AG04450 (cell line): ENCODE measurements at regions of chr17 and their contacts with region 1.

Region 1: DNA sequence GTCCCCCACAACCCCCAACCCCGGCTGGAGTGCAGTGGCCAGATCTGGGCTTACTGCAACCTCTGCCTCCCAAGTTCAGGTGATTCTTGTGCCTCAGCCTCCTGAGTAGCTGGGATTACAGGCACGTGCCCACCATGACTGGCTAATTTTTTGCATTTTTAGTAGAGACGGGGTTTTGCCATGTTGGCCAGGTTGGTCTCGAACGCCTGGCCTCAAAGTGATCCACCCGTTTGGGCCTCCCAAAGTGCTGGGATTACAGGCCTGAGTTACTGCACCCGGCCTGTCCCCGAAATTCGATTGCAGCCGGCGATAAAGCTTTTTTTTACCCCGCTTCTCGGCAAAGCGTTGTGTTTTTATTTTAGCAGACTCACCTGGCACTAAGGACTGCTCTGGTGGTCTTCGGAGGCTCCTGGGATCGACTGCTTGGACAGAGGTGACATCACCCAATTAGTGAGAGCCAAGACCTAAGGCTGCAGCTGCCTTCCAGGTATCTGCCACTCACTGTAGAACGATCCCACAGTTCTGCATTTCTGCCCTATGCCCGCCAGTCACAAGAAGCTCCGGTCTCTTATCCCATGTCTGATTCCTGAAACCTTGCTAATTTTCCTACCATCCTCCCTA is 82.2 kb upstream of the ARL4D start:
- DNase-seq: no peak
- H3K4me3 ChIP-seq: no peak overlapping the region
- H3K27ac ChIP-seq: no peak overlapping the region
- H3K27me3 ChIP-seq: no peaks in the 10 kb centered on the region
- CTCF ChIP-seq: no peak

Region 2: DNA sequence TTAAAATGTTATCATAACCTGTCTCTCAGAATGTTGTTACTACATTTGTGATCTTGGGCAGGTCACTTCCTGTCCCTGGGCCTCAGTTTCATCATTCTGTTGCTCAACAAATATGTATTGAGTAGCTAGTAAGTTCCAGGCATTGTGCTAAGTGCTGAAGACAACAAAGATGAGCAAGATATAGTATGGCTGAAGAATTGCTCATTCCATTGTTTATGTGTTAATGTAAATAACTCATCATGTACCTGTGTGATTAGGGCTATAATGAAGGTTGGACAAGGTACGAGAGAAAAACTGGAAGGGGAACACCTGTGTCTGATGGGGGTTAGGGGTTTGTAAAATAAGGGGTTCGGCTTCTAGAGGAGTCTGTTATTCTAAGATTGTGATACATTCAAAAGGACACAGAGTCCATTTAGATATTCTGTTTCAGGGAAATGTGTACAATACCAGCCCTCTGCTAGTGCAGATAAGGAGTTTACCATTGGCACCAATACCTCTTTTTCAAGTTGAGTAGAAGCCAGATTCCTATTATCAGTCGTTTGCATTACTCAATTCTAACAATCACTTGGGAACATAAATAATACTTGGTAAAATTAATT is 687.1 kb before region 1 on chr17:
- CTCF ChIA-PET with region 1: no interaction called
- POLR2A ChIA-PET with region 1: interaction called, 13 read pairs
- DNase-seq: no peak
- H3K4me3 ChIP-seq: no peak overlapping the region
- H3K27ac ChIP-seq: no peak overlapping the region
- H3K27me3 ChIP-seq: peaks cover 2% of the 10 kb centered on the region
- CTCF ChIP-seq: no peak

Region 3: DNA sequence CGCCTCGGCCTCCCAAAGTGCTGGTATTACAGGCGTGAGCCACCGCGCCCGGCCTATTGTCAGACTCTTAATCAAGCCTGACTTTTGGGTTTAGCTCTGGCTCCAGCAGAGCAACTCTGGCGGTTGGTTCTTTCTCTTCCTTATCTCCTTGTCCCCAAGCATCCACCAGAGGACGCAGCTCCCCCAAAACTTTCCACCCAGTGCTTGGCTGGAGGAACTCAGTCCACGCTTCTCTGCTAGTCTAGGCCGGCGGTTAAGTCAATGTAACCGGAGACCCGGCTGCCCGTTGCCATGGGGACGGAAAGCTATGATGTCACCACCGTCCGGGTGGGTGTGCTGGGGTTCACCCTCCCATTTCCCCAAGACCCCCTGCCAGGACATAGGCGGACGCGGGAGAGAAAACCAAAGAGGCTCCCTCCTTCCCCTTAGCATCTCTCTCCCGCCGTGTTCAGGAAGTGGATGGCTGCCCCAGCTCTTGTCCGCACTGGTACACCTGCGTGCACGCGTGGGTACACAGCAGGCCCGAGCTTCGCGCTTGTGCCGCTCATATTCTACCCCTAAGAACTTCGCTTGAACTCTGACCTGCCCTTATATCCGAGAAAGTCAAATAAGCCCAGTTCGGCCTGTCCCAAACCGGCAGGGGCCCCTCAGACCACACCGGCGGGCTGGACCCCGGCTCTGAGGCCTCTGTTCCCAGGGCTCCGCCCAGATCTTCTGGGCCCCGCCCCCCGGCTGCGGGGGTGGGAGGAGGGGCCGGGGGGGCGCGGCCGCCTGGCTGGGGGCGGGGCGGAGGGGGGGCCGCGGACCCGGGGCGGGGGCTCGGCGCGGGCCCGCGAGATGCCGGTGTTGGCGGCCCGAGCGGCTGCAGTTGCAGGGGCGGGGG is 292.0 kb before region 1 on chr17 and contains the start of gene RND2:
- CTCF ChIA-PET with region 1: no interaction called
- POLR2A ChIA-PET with region 1: interaction called, 22 read pairs
- DNase-seq: peak; percentile 84
- H3K4me3 ChIP-seq: peak within 1 kb of the TSS; percentile 72
- H3K27ac ChIP-seq: peak within 1 kb of the TSS; percentile 33
- H3K27me3 ChIP-seq: peaks cover 4% of the 10 kb centered on the region
- CTCF ChIP-seq: peak; percentile 87
- polyA plus RNA-seq, gene RND2: 1.7 and 2.1 TPM in 2 replicates

Region 4: GRCh38 chr17:43170766-43171585 is 145.7 kb before region 1 on chr17 and contains the start of gene NBR1:
- CTCF ChIA-PET with region 1: no interaction called
- POLR2A ChIA-PET with region 1: interaction called, 33 read pairs
- DNase-seq: peak; percentile 95
- H3K4me3 ChIP-seq: peak within 1 kb of the TSS; percentile 80
- H3K27ac ChIP-seq: peak within 1 kb of the TSS; percentile 91
- H3K27me3 ChIP-seq: no peaks in the 10 kb centered on the region
- CTCF ChIP-seq: peak; percentile 29; the same call in 1 of the 2 replicates
- polyA plus RNA-seq, gene NBR1: 103 and 107 TPM in 2 replicates

Region 5: GRCh38 chr17:43219746-43220380 is 96.8 kb before region 1 on chr17:
- CTCF ChIA-PET with region 1: no interaction called
- POLR2A ChIA-PET with region 1: interaction called, 10 read pairs
- DNase-seq: no peak
- H3K4me3 ChIP-seq: no peak overlapping the region
- H3K27ac ChIP-seq: no peak overlapping the region
- H3K27me3 ChIP-seq: no peaks in the 10 kb centered on the region
- CTCF ChIP-seq: no peak

Region 6: GRCh38 chr17:43388359-43389045 is 71.9 kb after region 1 on chr17:
- CTCF ChIA-PET with region 1: no interaction called
- POLR2A ChIA-PET with region 1: interaction called, 13 read pairs
- DNase-seq: peak; percentile 79
- H3K4me3 ChIP-seq: peak overlapping the region; percentile 69
- H3K27ac ChIP-seq: peak overlapping the region; percentile 96
- H3K27me3 ChIP-seq: no peaks in the 10 kb centered on the region
- CTCF ChIP-seq: no peak

Region 7: GRCh38 chr17:43431714-43432523 is 115.3 kb after region 1 on chr17:
- CTCF ChIA-PET with region 1: no interaction called
- POLR2A ChIA-PET with region 1: no interaction called
- DNase-seq: no peak
- H3K4me3 ChIP-seq: no peak overlapping the region
- H3K27ac ChIP-seq: no peak overlapping the region
- H3K27me3 ChIP-seq: no peaks in the 10 kb centered on the region
- CTCF ChIP-seq: no peak

Region 8: DNA sequence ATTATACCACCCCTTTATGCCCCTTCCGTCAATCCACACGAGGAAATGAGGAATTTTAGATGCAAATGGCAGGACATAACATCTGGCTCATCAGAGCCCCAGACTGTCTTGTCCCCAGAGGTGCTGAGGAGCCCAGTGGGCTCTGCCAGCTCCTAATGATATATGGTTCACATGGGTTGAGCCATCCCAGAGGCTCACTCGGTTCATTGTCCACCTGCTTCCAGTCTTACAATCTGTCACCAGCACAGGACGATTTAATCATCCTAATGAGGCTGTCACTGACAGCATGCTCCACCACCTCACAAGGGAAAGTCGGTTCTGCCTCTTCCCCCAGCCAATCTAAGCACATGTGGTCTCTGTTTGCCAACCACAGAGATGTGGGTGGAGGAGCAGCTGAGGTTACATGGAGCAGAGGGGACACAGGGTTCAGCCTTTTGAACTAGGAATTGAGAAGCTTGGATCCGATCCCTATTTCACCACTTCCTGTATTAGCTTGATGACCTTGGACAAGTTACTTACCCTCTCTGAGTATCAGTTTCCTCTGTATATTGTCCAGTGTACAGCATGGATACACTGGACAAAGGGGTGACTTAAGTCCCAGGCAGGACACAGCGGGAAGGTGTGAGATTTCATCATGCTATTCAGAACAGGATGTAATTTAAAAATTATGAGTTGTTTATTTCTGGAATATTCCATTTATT is 140.2 kb after region 1 on chr17:
- CTCF ChIA-PET with region 1: no interaction called
- POLR2A ChIA-PET with region 1: no interaction called
- DNase-seq: no peak
- H3K4me3 ChIP-seq: no peak overlapping the region
- H3K27ac ChIP-seq: no peak overlapping the region
- H3K27me3 ChIP-seq: no peaks in the 10 kb centered on the region
- CTCF ChIP-seq: no peak

Region 9: GRCh38 chr17:43891851-43892646 is 575.4 kb after region 1 on chr17:
- CTCF ChIA-PET with region 1: no interaction called
- POLR2A ChIA-PET with region 1: no interaction called
- DNase-seq: no peak
- H3K4me3 ChIP-seq: no peak overlapping the region
- H3K27ac ChIP-seq: no peak overlapping the region
- H3K27me3 ChIP-seq: peaks cover 21% of the 10 kb centered on the region
- CTCF ChIP-seq: no peak